Ascending aorta (tissue), 2 donors: ENCODE measurements at regions of chr1 and their contacts with region 1.

Region 1: DNA sequence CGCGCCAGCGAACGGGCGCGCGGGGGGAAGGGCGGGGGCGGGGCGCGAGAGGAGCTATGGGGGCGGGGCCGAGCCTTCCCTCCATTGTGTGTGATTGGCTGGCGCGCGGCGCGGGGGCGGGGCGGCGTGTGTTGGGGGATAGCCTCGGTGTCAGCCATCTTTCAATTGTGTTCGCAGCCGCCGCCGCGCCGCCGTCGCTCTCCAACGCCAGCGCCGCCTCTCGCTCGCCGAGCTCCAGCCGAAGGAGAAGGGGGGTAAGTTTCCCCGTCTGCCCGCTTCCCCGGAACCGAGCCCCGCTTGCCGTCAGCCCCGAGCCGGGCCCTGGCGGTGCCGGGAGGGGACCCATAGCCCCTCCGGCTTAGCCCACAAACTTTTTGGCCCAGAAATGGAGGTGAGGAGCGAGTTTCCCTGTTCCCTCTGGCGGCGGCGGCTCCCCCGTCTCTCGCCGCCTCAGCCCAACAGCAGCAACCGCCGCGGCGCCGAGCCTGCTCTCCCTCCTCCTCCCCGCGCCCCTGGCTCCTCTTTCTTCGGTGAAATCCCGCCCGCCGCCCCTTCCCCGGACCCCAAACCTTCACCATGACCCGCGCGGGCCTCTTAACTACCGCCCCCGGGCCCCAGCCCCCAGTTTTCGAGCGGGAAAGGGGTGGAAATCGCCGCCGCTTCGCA is at the start of gene H3-3A:
- DNase-seq: peak; percentile 92 to 99
- H3K4me3 ChIP-seq: peak within 1 kb of the TSS; percentile 69 to 91
- H3K27ac ChIP-seq: peak within 1 kb of the TSS; percentile 96 to 97
- H3K4me1 ChIP-seq: peaks cover 0 to 32% of the 10 kb centered on the region in 2 donors
- H3K27me3 ChIP-seq: no peaks in the 10 kb centered on the region
- CTCF ChIP-seq: peak in 1 of 3 experiments; percentile 13
- total RNA-seq, gene H3-3A: 214 TPM

Region 2: GRCh38 chr1:225746361-225747179 is 316.1 kb before region 1 on chr1:
- intact Hi-C with region 1: no loop called
- DNase-seq: peak in 1 of 2 donors; percentile 88
- H3K4me3 ChIP-seq: peak overlapping the region; percentile 62 to 68
- H3K27ac ChIP-seq: peak overlapping the region; percentile 91 to 95
- H3K4me1 ChIP-seq: peaks cover 5 to 16% of the 10 kb centered on the region in 2 donors
- H3K27me3 ChIP-seq: no peaks in the 10 kb centered on the region
- CTCF ChIP-seq: peak in 2 of 3 experiments; percentile 5 to 13

Region 3: GRCh38 chr1:225881969-225882693 is 180.6 kb before region 1 on chr1 and contains the start of gene TMEM63A:
- intact Hi-C with region 1: loop called (anchors 5 kb)
- DNase-seq: peak; percentile 69 to 96
- H3K4me3 ChIP-seq: peak within 1 kb of the TSS; percentile 57 to 90
- H3K27ac ChIP-seq: peak within 1 kb of the TSS; percentile 87 to 90
- H3K4me1 ChIP-seq: peaks cover 25 to 41% of the 10 kb centered on the region in 2 donors
- H3K27me3 ChIP-seq: no peaks in the 10 kb centered on the region
- CTCF ChIP-seq: peak; percentile 45 to 56 (median 53)
- total RNA-seq, gene TMEM63A: 41.3 TPM

Region 4: GRCh38 chr1:225933072-225933471 is 129.6 kb before region 1 on chr1:
- intact Hi-C with region 1: no loop called
- DNase-seq: no peak
- H3K4me3 ChIP-seq: no peak overlapping the region
- H3K27ac ChIP-seq: no peak overlapping the region
- H3K4me1 ChIP-seq: no peaks in the 10 kb centered on the region
- H3K27me3 ChIP-seq: no peaks in the 10 kb centered on the region
- CTCF ChIP-seq: no peak

Region 5: GRCh38 chr1:225999227-225999911 is 63.3 kb before region 1 on chr1 and contains the start of gene SDE2:
- intact Hi-C with region 1: loop called (anchors 1 kb)
- DNase-seq: peak; percentile 98 to 100
- H3K4me3 ChIP-seq: peak within 1 kb of the TSS; percentile 84 to 96
- H3K27ac ChIP-seq: peak within 1 kb of the TSS; percentile 96 to 97
- H3K4me1 ChIP-seq: peaks cover 0 to 27% of the 10 kb centered on the region in 2 donors
- H3K27me3 ChIP-seq: no peaks in the 10 kb centered on the region
- CTCF ChIP-seq: no peak
- total RNA-seq, gene SDE2: 12.3 TPM

Region 6: DNA sequence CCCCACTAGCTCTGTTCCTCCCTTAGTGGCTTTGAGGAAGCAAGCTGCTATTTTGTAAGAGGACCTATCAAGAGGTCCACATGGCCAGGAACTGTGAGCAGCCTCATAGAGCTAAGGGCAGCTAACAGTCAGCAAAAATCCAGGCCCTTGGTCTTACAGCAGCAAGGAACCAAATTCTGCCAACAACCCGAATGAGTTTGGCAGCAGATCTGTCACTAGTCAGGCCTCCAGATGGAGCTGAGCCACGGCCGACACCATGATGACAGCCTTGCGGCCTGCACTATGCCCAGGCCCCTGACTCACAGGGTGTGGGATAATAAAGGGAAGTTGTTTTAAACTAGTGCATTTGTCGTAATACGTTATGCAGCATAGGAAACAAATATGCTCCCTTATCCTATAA is 28.2 kb before region 1 on chr1:
- intact Hi-C with region 1: loop called (anchors 1 kb)
- DNase-seq: peak; percentile 85 to 96
- H3K4me3 ChIP-seq: no peak overlapping the region
- H3K27ac ChIP-seq: peak overlapping the region; percentile 66 to 77
- H3K4me1 ChIP-seq: peaks cover 0 to 12% of the 10 kb centered on the region in 2 donors
- H3K27me3 ChIP-seq: no peaks in the 10 kb centered on the region
- CTCF ChIP-seq: no peak

Region 7: GRCh38 chr1:226083302-226084101 is 20.8 kb after region 1 on chr1:
- intact Hi-C with region 1: loop called (anchors 1 kb)
- DNase-seq: peak; percentile 60 to 94
- H3K4me3 ChIP-seq: peak overlapping the region; percentile 83 to 92
- H3K27ac ChIP-seq: peak overlapping the region; percentile 75 to 85
- H3K4me1 ChIP-seq: peaks cover 4 to 11% of the 10 kb centered on the region in 2 donors
- H3K27me3 ChIP-seq: no peaks in the 10 kb centered on the region
- CTCF ChIP-seq: peak in 2 of 3 experiments; percentile 13 to 20

Region 8: GRCh38 chr1:226109829-226110248 is 47.1 kb after region 1 on chr1:
- intact Hi-C with region 1: loop called (anchors 1 kb)
- DNase-seq: peak; percentile 52 to 95
- H3K4me3 ChIP-seq: peak overlapping the region; percentile 56 to 72
- H3K27ac ChIP-seq: peak overlapping the region; percentile 92 to 98
- H3K4me1 ChIP-seq: peaks cover 14 to 38% of the 10 kb centered on the region in 2 donors
- H3K27me3 ChIP-seq: no peaks in the 10 kb centered on the region
- CTCF ChIP-seq: peak in 1 of 3 experiments; percentile 29

Region 9: DNA sequence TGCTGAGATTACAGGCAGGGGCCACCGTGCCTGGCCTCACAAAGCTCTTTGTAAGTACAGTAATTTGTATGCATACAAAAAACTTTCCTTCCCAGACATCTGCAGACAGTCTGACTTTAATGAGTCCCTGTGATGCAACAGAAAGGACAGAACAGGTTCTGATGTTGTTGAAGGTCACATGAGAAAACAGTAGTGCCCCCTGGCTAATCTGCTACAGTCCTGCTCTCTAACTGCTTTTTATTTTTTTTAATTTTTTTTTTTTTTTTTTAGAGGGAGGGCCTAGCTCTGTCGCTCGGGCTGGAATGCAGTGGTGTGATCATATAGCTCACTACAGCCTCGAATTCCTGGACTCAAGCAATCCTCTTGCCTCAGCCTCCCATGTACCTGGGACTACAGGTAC is 87.1 kb after region 1 on chr1:
- intact Hi-C with region 1: no loop called
- DNase-seq: no peak
- H3K4me3 ChIP-seq: no peak overlapping the region
- H3K27ac ChIP-seq: no peak overlapping the region
- H3K4me1 ChIP-seq: no peaks in the 10 kb centered on the region
- H3K27me3 ChIP-seq: no peaks in the 10 kb centered on the region
- CTCF ChIP-seq: no peak

Region 10: GRCh38 chr1:226186124-226187018 is 123.7 kb after region 1 on chr1 and contains the start of gene ACBD3:
- intact Hi-C with region 1: loop called (anchors 5 kb)
- DNase-seq: peak; percentile 57 to 93
- H3K4me3 ChIP-seq: peak within 1 kb of the TSS; percentile 96 to 100
- H3K27ac ChIP-seq: peak within 1 kb of the TSS; percentile 87 to 98
- H3K4me1 ChIP-seq: peaks cover 6 to 17% of the 10 kb centered on the region in 2 donors
- H3K27me3 ChIP-seq: no peaks in the 10 kb centered on the region
- CTCF ChIP-seq: no peak
- total RNA-seq, gene ACBD3: 31.5 TPM